ENCODE measurements at regions of chr18 and their contacts with region 1.

Region 1: GRCh38 chr18:49967171-49967570 is 153.8 kb upstream of the ACAA2 start:
- DNase-seq: no peak

Region 2: DNA sequence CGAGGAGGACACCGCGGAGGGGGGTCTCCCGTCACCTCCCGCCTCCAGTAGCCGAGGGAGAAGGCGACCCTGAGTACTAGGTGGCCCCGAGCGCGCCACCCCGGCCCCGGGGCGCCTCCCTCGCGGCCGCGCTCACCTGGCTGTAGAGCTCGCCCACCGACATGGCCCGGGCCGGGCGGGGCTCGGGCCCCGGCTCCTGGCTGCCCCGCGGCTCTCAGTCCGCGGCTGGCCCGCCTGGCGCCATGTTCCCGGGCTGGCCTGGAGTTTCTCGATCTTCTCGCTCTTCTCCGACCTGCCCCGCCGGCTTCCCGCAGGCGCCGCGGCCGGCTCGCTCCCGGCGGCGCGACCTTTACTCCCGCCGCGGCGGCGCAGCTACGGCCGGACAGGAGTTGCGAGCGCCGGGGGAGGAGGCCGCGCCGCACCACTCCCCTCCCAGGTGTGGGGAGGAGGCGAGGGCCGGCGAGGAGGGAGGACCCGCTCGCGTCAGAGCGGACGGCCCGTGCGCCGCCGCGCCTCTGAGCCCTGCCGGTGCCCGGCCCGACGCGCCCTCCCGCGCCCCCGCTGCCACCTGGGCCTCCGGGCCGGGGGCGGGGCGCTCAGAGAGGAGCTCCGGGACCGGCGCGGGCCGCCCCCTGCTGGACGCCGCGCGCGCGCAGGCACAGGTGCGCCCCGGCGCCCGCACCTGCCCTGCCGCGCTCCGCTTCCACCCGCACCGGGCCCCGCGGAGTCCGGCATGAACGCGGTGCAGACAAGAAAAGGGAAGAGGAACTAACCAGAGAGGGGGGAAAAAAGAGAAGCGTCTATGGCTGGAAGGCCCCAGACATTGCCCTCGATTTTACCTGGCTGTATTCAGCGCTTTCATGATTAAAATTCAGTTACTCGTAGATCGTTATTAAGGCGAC is 227.7 kb after region 1 on chr18 and contains the start of gene MYO5B:
- in situ Hi-C with region 1: loop called (anchors 25 kb)
- DNase-seq: peak; percentile 12
- total RNA-seq, gene MYO5B: not detected in 2 replicates

Measured in G401 (cell line).